IMR-90 (cell line): ENCODE measurements at regions of chr11 and their contacts with region 1.

Region 1: DNA sequence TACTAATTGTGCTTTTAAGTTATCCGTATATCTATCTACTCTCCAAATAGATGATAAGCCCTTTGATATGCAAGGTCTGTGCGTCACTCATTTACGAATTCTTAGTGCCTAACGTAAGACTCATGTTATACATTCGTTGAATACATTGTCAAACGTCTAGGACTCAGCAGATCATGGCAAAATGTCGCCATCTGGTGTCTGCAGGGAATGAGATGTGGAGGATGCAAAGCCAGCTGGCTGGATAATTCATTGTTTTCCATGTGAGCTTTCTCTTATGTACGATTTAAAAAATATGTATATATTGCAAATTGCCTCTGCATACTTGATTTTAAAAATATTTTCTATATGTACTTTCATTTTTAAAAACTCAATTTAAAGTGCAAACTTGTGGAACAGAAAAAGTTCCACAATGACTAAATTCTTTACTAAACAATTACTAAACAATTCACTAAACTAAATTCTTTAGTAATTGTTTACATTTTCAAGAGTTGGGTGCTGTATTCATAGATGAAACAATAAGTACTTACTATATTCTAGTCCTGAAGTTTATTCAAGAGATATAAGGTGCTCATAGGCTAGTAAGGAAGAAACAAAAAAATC is 33.8 kb downstream of the ZNF202 start:
- DNase-seq: peak; percentile 77
- ATAC-seq: peak; percentile 84
- H3K4me3 ChIP-seq: no peak overlapping the region
- H3K27ac ChIP-seq: no peak overlapping the region
- H3K4me1 ChIP-seq: no peaks in the 10 kb centered on the region
- H3K27me3 ChIP-seq: peaks cover 18% of the 10 kb centered on the region
- CTCF ChIP-seq: peak; percentile 83
- POLR2A ChIP-seq: no peak
- RAD21 ChIP-seq: peak; percentile 83

Region 2: GRCh38 chr11:123511037-123511870 is 196.5 kb before region 1 on chr11:
- CTCF ChIA-PET with region 1: no interaction called
- POLR2A ChIA-PET with region 1: no interaction called
- dilution Hi-C with region 1: no loop called
- in situ Hi-C with region 1: loop called (anchors 5 kb)
- intact Hi-C with region 1: loop called (anchors 1 kb)
- DNase-seq: peak; percentile 88
- ATAC-seq: peak; percentile 98
- H3K4me3 ChIP-seq: no peak overlapping the region
- H3K27ac ChIP-seq: no peak overlapping the region
- H3K4me1 ChIP-seq: peaks cover 6% of the 10 kb centered on the region; the same call in 1 of the 2 replicates
- H3K27me3 ChIP-seq: no peaks in the 10 kb centered on the region
- CTCF ChIP-seq: peak; percentile 96
- POLR2A ChIP-seq: no peak; the same call in 1 of the 2 replicates
- RAD21 ChIP-seq: peak; percentile 85

Region 3: GRCh38 chr11:123519055-123519796 is 188.5 kb before region 1 on chr11:
- CTCF ChIA-PET with region 1: no interaction called
- POLR2A ChIA-PET with region 1: no interaction called
- dilution Hi-C with region 1: no loop called
- in situ Hi-C with region 1: loop called (anchors 5 kb)
- intact Hi-C with region 1: no loop called
- DNase-seq: peak; percentile 27
- ATAC-seq: peak; percentile 66
- H3K4me3 ChIP-seq: no peak overlapping the region
- H3K27ac ChIP-seq: no peak overlapping the region
- H3K4me1 ChIP-seq: peaks cover 8% of the 10 kb centered on the region
- H3K27me3 ChIP-seq: no peaks in the 10 kb centered on the region
- CTCF ChIP-seq: no peak
- POLR2A ChIP-seq: no peak
- RAD21 ChIP-seq: no peak

Region 4: DNA sequence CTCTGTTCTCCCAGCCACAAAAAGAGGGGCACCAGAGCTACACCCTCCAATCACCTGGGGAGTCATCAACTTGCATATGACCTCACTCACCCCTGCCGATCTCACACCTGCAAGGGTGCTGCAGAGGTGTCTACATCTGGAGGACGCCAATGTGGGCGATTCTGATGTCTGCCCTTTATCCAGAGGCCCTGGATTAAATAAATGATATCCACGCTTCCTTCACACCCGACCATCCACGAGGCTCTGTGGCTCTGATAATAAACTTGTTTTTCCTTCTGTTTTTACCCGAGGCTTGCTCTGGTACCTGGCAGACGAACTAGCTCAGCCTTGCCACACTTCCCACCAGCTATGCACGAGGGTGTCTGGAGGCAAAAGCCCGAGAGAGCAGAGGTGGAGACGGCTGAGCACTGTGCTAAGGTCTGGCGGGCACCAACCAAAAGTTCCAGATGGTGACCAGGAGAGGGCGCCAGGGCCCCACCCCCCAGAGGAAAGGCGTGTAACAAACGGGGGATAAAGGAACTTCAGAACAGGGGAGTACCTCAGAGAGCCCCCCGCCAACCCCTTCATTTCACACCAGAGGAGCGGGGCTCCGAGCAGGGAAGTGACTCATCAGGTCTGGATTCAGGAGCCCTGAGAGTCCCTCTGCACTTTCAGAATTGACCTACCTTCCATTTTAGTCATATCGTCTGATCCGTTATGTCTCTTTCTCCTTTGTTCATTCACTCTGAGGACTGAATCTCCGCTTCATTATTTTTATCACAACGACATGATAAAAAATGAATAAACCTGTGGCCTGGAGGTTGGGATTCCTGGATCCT is 66.8 kb before region 1 on chr11:
- CTCF ChIA-PET with region 1: interaction called, 3 read pairs
- POLR2A ChIA-PET with region 1: no interaction called
- dilution Hi-C with region 1: no loop called
- in situ Hi-C with region 1: loop called (anchors 5 kb)
- intact Hi-C with region 1: loop called (anchors 1 kb)
- DNase-seq: peak; percentile 17
- ATAC-seq: peak; percentile 98
- H3K4me3 ChIP-seq: no peak overlapping the region
- H3K27ac ChIP-seq: no peak overlapping the region
- H3K4me1 ChIP-seq: no peaks in the 10 kb centered on the region
- H3K27me3 ChIP-seq: peaks cover 46% of the 10 kb centered on the region
- CTCF ChIP-seq: peak; percentile 75
- POLR2A ChIP-seq: no peak
- RAD21 ChIP-seq: peak; percentile 81

Region 5: DNA sequence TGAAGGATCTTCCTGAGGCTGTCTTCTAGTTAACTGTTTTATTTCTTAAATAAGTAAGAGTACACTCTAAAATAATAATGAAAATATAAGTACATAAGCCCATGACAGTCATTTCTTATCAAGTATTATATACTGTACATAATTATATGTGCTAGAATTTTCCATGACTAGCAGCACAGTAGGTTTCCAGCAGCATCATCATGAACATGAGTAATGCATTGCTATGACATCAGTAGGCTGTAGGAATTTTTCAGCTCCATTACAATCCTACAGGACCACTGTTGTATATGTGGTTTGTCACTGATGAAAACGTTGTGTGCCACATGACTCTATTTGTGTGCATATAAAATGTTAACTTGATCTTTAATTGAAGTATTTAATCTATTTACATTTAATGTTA is 11.7 kb after region 1 on chr11:
- CTCF ChIA-PET with region 1: interaction called, 12 read pairs
- POLR2A ChIA-PET with region 1: no interaction called
- dilution Hi-C with region 1: no loop called
- in situ Hi-C with region 1: no loop called
- intact Hi-C with region 1: no loop called
- DNase-seq: peak; percentile 85
- ATAC-seq: peak; percentile 76
- H3K4me3 ChIP-seq: no peak overlapping the region
- H3K27ac ChIP-seq: no peak overlapping the region
- H3K4me1 ChIP-seq: no peaks in the 10 kb centered on the region
- H3K27me3 ChIP-seq: peaks cover 2% of the 10 kb centered on the region; the same call in 1 of the 2 replicates
- CTCF ChIP-seq: no peak
- POLR2A ChIP-seq: no peak
- RAD21 ChIP-seq: no peak

Region 6: GRCh38 chr11:123806249-123806648 is 98.5 kb after region 1 on chr11 and contains the start of gene OR6M1:
- CTCF ChIA-PET with region 1: no interaction called
- POLR2A ChIA-PET with region 1: no interaction called
- dilution Hi-C with region 1: no loop called
- in situ Hi-C with region 1: no loop called
- intact Hi-C with region 1: no loop called
- DNase-seq: no peak
- ATAC-seq: no peak
- H3K4me3 ChIP-seq: no peak within 1 kb of the TSS
- H3K27ac ChIP-seq: no peak within 1 kb of the TSS
- H3K4me1 ChIP-seq: no peaks in the 10 kb centered on the region
- H3K27me3 ChIP-seq: no peaks in the 10 kb centered on the region
- CTCF ChIP-seq: no peak
- POLR2A ChIP-seq: no peak
- RAD21 ChIP-seq: no peak
- total RNA-seq, gene OR6M1: not detected in 2 replicates